Astrocyte of the cerebellum (primary cell): ENCODE measurements at regions of chr7 and their contacts with region 1.

Region 1: DNA sequence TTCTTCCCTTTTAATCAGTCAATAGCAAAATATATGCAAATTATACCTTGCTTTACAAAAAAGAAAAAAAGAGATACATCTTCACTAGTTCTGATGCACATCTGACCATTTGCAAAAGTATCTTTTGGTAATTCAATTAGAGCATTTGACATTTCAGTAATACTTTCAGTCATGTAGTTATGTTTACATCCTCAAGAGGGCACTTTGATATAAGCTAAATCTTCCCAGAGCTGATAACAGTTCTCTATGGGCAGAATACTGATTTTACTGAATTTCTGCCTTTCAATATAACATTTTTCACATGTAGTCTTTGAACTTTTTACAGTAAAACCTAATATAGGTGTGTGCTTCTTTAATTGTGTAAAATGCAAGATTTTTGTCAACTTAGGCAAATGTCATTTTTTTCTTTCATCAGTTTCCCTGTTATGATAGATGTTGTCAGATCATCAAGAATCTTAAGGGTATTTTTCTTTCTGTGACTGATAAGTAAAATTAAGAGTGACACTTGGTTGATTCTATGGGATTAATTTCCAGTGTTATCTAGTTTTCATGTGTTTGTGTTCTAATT is 703.5 kb upstream of the SEMA3D start:
- DNase-seq: peak; percentile 16
- H3K4me3 ChIP-seq: no peak overlapping the region
- CTCF ChIP-seq: peak; percentile 28

Region 2: DNA sequence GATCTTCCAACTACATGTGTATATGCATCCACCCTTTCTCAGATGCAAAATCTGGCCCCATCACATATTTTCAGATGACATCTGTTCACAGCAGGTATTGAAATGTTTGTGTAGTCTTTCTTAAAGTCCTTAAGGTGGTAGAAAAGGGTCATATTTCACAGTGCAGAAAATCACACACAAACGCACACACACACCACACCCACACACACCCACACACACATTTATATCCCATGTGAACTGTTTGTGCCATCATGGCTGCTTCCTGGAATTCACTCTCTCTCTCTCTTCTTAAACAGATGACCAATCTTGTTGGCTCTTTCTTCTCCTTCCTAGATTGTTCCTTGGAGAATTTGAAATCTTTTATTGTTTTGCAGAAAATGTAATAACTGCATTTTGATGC is 90.4 kb after region 1 on chr7:
- in situ Hi-C with region 1: no loop called
- DNase-seq: no peak
- H3K4me3 ChIP-seq: no peak overlapping the region
- CTCF ChIP-seq: no peak

Region 3: GRCh38 chr7:86469680-86470295 is 579.5 kb after region 1 on chr7:
- in situ Hi-C with region 1: loop called (anchors 10 kb)
- DNase-seq: peak; percentile 83
- H3K4me3 ChIP-seq: no peak overlapping the region
- CTCF ChIP-seq: peak; percentile 61

Region 4: DNA sequence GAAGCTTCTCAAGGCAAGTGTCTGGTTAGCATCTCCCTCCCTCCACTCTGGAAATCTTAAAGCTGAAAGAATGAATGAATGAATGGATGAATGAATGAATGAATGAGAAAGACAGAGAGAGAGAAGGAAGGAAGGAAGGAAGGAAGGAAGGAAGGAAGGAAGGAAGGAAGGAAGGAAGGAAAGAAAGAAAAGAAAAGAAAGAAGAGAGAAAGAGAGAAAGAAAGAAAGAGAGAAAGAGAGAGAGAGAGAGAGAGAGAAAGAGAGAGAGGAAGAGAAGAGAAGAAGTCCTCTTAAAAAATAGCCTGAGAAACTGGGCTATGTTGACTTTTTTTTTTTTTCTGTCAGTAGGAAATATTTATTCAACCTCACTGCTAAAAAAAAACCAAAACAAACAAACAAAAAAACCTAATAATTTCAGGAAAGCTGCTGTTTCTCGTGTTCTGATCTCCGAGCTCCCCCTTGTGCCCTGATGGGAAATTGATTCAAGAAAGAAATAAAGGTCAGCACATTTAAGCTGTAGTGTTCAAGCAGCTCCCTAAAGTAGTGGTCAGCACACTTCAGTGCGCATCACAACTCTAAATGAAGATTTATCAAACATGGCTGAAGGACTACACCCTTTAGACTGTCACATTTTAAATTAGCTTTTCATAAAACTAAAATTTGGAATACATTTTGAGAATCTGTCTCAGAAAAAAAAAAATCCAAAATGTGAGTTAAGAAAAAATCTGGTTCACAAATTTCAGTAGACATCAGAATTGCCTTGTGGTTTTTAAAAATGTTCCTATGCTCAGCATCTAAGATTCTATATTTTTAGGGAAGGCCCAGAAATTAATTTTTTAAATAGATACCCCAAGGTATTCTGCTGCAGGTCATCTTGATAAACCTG is 1014.9 kb after region 1 on chr7:
- in situ Hi-C with region 1: loop called (anchors 25 kb)
- DNase-seq: no peak
- H3K4me3 ChIP-seq: no peak overlapping the region
- CTCF ChIP-seq: peak; percentile 71